ENCODE measurements at regions of chr4 and their contacts with region 1.

Region 1: DNA sequence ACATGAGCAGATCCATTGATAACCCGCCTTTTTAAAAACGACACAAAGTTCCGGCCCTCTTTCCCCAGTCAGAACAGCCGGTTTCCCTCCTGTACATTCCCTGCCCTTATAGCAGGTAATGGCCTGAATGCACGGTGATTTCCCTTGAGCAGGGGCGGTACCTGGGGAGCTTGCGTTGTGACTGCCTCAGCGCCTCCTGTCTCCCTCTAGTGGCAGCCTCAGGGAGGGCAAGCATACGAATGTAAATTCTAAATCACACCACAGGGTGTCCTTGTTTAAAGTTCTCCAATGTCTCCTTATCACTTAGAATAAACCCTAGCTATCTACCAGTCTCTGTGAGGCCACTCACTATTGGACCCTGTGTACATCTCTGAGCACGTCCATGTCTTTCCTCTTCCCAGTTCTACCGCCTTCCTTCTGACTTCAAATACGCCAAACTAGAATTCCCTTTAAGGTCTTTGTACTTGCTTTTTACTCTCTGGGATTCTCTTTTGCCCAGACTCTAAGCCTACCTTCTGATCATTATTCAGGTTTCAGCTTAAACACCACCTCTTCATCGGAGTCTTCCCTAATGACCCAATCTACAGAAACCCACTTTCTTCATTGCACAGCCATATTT is 18.4 kb upstream of the LDB2 start:
- DNase-seq: peak; percentile 63
- ATAC-seq: peak; percentile 99
- H3K4me3 ChIP-seq: no peak overlapping the region
- H3K27ac ChIP-seq: no peak overlapping the region
- H3K4me1 ChIP-seq: no peaks in the 10 kb centered on the region
- H3K27me3 ChIP-seq: no peaks in the 10 kb centered on the region
- CTCF ChIP-seq: peak; percentile 95
- EP300 ChIP-seq: no peak
- POLR2A ChIP-seq: no peak
- RAD21 ChIP-seq: peak; percentile 90

Region 2: DNA sequence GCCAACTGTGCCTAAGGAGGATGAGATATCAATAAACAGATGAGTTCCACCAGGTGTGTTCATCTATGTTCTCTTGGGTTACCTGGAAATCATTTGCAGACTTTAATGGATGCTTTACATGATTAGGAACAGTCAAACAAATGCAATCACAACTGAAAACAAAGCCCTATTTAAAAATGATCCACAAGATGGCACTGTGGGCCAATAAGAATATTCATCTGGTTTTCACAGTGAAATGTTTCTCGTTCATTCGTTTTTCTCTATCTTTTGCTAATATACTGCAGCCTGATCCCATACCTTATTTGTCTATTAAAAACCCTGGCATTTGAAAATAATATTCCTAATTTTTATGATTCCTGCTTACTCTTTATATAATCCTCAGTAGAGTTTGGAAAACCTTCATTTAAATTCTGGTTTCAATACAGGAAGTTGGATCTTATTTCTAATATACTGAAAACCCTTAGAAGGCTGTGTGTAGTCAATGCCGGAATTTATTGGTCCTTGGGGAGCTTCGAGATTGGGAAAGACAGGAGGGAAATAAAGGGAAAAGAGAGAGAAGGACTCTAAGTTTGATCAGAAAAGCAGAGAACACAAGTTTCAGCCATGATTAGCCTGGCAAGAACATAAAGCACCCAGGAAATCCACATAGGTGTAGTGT is 626.8 kb before region 1 on chr4:
- CTCF ChIA-PET with region 1: no interaction called
- POLR2A ChIA-PET with region 1: no interaction called
- in situ Hi-C with region 1: no loop called
- intact Hi-C with region 1: loop called (anchors 5 kb)
- DNase-seq: peak; percentile 7
- ATAC-seq: no peak
- H3K4me3 ChIP-seq: no peak overlapping the region
- H3K27ac ChIP-seq: no peak overlapping the region
- H3K4me1 ChIP-seq: no peaks in the 10 kb centered on the region
- H3K27me3 ChIP-seq: no peaks in the 10 kb centered on the region
- CTCF ChIP-seq: peak; percentile 67
- EP300 ChIP-seq: no peak
- POLR2A ChIP-seq: no peak
- RAD21 ChIP-seq: 0 out of 2 replicates have a peak, but pooled peaks have one; percentile 12

Region 3: DNA sequence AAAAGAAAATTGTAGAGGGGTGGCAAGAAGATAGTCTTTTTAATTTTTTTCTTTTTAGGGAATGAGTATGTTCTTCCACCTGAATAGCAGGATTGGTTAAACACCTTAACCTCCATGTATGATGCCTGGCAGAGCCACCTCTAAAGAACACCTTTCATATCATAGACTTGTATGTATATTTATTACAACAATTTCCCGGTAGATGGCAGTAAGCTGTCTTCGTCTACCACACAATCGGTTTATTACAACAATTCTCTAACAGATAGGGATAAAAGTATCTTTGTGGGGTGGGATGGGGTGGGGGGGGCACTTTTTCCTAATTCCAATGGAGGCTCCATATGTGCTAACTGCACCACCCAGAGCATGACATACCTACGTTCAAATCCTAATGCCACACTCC is 273.9 kb before region 1 on chr4:
- CTCF ChIA-PET with region 1: no interaction called
- POLR2A ChIA-PET with region 1: no interaction called
- in situ Hi-C with region 1: no loop called
- intact Hi-C with region 1: loop called (anchors 1 kb)
- DNase-seq: peak; percentile 7
- ATAC-seq: peak; percentile 53; the same call in 1 of the 3 replicates
- H3K4me3 ChIP-seq: no peak overlapping the region
- H3K27ac ChIP-seq: no peak overlapping the region
- H3K4me1 ChIP-seq: no peaks in the 10 kb centered on the region
- H3K27me3 ChIP-seq: no peaks in the 10 kb centered on the region
- CTCF ChIP-seq: peak; percentile 52
- EP300 ChIP-seq: no peak
- POLR2A ChIP-seq: no peak
- RAD21 ChIP-seq: no peak

Region 4: DNA sequence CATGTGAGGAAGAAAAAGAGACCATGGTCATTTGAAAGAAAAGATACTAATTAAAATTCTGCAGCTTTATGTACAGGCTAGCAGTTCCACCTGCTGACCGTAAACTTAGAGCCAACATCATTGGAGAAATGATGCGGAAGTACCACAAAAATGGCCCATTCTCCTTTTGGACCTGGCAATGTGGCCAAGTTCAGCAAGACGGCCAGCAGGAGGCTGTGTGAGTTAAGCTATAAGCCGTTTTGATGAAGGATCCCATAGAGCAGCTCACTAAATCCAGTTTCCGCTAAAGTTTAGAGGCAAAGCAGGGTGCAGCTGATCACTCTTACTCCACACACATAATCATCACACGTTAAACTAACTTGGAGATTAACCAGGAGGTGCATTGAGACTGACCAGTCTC is 152.2 kb before region 1 on chr4:
- CTCF ChIA-PET with region 1: interaction called, 15 read pairs
- POLR2A ChIA-PET with region 1: no interaction called
- in situ Hi-C with region 1: no loop called
- intact Hi-C with region 1: loop called (anchors 1 kb)
- DNase-seq: peak; percentile 9
- ATAC-seq: peak; percentile 81
- H3K4me3 ChIP-seq: no peak overlapping the region
- H3K27ac ChIP-seq: no peak overlapping the region
- H3K4me1 ChIP-seq: no peaks in the 10 kb centered on the region
- H3K27me3 ChIP-seq: no peaks in the 10 kb centered on the region; a peak in 1 of 5 replicates
- CTCF ChIP-seq: peak; percentile 62
- EP300 ChIP-seq: no peak
- POLR2A ChIP-seq: no peak
- RAD21 ChIP-seq: no peak

Region 5: GRCh38 chr4:16794816-16795445 is 121.9 kb before region 1 on chr4:
- CTCF ChIA-PET with region 1: interaction called, 37 read pairs
- POLR2A ChIA-PET with region 1: no interaction called
- in situ Hi-C with region 1: loop called (anchors 10 kb)
- intact Hi-C with region 1: loop called (anchors 1 kb)
- DNase-seq: peak; percentile 63
- ATAC-seq: peak; percentile 88
- H3K4me3 ChIP-seq: no peak overlapping the region
- H3K27ac ChIP-seq: no peak overlapping the region
- H3K4me1 ChIP-seq: no peaks in the 10 kb centered on the region; the same call in 1 of the 2 replicates
- H3K27me3 ChIP-seq: no peaks in the 10 kb centered on the region
- CTCF ChIP-seq: peak; percentile 91
- EP300 ChIP-seq: no peak
- POLR2A ChIP-seq: no peak
- RAD21 ChIP-seq: peak; percentile 82

Region 6: DNA sequence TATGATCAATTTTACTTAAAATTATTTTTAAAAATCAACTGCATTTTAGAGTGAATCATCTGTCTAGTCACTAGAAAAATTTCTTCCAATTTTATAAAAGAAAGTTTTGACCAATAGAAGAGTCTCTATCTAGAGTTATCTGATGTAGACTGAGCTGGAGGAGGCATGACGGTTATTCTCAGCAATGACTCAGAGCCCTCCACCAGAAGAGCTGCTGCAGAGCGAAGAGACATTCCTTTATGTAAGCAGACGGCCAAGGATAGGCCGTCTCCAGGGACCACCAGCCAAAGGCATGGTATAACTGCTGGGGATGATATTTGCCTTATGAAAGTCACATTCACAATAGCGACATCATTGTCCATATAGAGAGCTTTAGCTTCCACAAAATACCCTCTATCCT is 41.3 kb before region 1 on chr4:
- CTCF ChIA-PET with region 1: no interaction called
- POLR2A ChIA-PET with region 1: no interaction called
- in situ Hi-C with region 1: no loop called
- intact Hi-C with region 1: no loop called
- DNase-seq: no peak
- ATAC-seq: no peak
- H3K4me3 ChIP-seq: no peak overlapping the region
- H3K27ac ChIP-seq: no peak overlapping the region
- H3K4me1 ChIP-seq: no peaks in the 10 kb centered on the region
- H3K27me3 ChIP-seq: peaks cover 0 to 3% of the 10 kb centered on the region in 2 experiments; a peak in 1 of 5 replicates
- CTCF ChIP-seq: no peak
- EP300 ChIP-seq: no peak
- POLR2A ChIP-seq: no peak
- RAD21 ChIP-seq: no peak

Region 7: GRCh38 chr4:16988814-16989213 is 72.0 kb after region 1 on chr4:
- CTCF ChIA-PET with region 1: no interaction called
- POLR2A ChIA-PET with region 1: no interaction called
- in situ Hi-C with region 1: no loop called
- intact Hi-C with region 1: no loop called
- DNase-seq: no peak
- ATAC-seq: no peak
- H3K4me3 ChIP-seq: no peak overlapping the region
- H3K27ac ChIP-seq: no peak overlapping the region
- H3K4me1 ChIP-seq: no peaks in the 10 kb centered on the region
- H3K27me3 ChIP-seq: no peaks in the 10 kb centered on the region
- CTCF ChIP-seq: no peak
- EP300 ChIP-seq: no peak
- POLR2A ChIP-seq: no peak
- RAD21 ChIP-seq: no peak

Region 8: DNA sequence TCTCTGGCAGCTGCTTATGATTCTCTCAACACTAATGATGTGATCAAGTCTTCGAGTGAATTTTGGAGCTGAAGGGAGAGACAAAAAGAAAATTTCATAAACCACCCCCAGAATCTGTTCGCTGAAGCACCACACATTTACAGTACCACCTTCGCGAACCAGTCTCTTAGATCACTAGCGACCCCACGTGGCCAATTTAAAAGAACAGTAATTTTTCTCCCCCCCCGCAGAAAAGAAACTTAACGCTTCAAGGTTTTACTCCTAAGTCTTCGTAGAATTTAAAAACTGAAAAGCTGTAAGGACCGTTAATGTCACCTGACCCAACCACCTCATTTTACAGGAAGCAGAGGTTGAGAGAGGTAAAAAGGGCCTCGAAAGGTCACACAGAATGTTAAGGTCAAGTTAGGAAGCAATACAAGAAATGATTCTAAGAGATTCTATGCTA is 407.6 kb after region 1 on chr4:
- CTCF ChIA-PET with region 1: interaction called, 5 read pairs
- POLR2A ChIA-PET with region 1: no interaction called
- in situ Hi-C with region 1: loop called (anchors 10 kb)
- intact Hi-C with region 1: loop called (anchors 5 kb)
- DNase-seq: peak; percentile 12
- ATAC-seq: peak; percentile 48; the same call in 2 of the 3 replicates
- H3K4me3 ChIP-seq: no peak overlapping the region
- H3K27ac ChIP-seq: no peak overlapping the region
- H3K4me1 ChIP-seq: no peaks in the 10 kb centered on the region
- H3K27me3 ChIP-seq: peaks cover 0 to 7% of the 10 kb centered on the region in 2 experiments; a peak in 1 of 5 replicates
- CTCF ChIP-seq: peak; percentile 60
- EP300 ChIP-seq: no peak
- POLR2A ChIP-seq: no peak
- RAD21 ChIP-seq: peak; percentile 31; the same call in 1 of the 2 replicates

Region 9: GRCh38 chr4:17447675-17448298 is 531.0 kb after region 1 on chr4:
- CTCF ChIA-PET with region 1: interaction called, 5 read pairs
- POLR2A ChIA-PET with region 1: no interaction called
- in situ Hi-C with region 1: no loop called
- intact Hi-C with region 1: loop called (anchors 2 kb)
- DNase-seq: peak; percentile 67
- ATAC-seq: peak; percentile 99
- H3K4me3 ChIP-seq: no peak overlapping the region
- H3K27ac ChIP-seq: no peak overlapping the region
- H3K4me1 ChIP-seq: no peaks in the 10 kb centered on the region
- H3K27me3 ChIP-seq: no peaks in the 10 kb centered on the region; a peak in 1 of 5 replicates
- CTCF ChIP-seq: peak; percentile 89
- EP300 ChIP-seq: no peak
- POLR2A ChIP-seq: no peak
- RAD21 ChIP-seq: 0 out of 2 replicates have a peak, but pooled peaks have one; percentile 25

Measured in HepG2 (cell line).